ENCODE measurements at regions of chr12 and their contacts with region 1.

Region 1: DNA sequence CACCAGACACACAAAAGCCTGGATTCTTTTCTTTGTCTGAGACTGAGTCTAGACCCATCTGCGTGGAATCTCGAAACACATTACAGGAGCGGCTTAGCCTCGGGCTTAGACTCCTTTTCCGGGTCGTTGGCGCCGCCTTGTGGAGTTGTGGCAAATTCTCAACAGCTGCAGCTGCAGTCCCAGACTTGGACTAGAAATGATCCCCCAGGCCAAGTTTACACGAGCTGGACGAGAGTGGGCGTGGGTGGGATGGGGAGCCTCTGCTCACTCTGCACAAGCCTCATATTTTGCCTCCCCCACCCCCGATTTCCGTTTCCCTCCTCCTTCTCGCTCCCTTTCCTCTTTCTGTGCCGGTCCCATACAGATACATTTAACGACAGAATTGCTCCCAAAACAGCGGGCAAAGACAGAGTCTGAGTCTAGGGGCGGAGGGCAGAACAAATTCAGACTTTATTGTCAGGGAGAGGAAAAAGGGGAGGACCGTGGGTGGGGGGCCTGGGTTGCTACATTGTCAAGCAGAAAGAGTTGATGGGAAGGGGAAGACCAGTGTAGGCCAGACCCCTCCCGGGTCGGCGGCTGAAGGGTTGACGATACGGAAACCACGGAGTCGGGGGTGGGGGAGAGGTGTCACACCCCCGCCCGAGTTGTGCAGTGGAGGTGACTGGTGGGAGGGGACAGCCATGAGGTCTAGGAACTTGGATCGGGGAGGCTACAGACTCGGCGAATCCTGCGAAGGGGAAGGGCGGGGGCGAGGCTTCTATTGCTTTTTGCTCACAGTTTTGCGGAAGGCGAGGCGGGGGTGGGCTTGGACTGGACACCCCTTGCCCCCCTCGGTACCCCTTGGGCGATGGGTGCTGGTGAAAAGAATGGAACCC is 4.7 kb upstream of the GPR84 start:
- DNase-seq: peak; percentile 85
- H3K4me3 ChIP-seq: peak overlapping the region; percentile 6 to 39 (median 23)
- H3K27ac ChIP-seq: no peak overlapping the region
- H3K4me1 ChIP-seq: peaks cover 33% of the 10 kb centered on the region
- H3K27me3 ChIP-seq: no peaks in the 10 kb centered on the region
- CTCF ChIP-seq: peak; percentile 91 to 92
- POLR2A ChIP-seq: no peak

Region 2: GRCh38 chr12:54220092-54220557 is 148.8 kb before region 1 on chr12:
- CTCF ChIA-PET with region 1: interaction called, 12 read pairs
- POLR2A ChIA-PET with region 1: no interaction called
- dilution Hi-C with region 1: no loop called
- intact Hi-C with region 1: loop called (anchors 1 kb)
- DNase-seq: peak; percentile 76
- H3K4me3 ChIP-seq: no peak overlapping the region
- H3K27ac ChIP-seq: no peak overlapping the region
- H3K4me1 ChIP-seq: peaks cover 14% of the 10 kb centered on the region
- H3K27me3 ChIP-seq: peaks cover 2 to 5% of the 10 kb centered on the region in 2 experiments
- CTCF ChIP-seq: peak; percentile 77 to 85
- POLR2A ChIP-seq: no peak

Region 3: GRCh38 chr12:54294152-54294952 is 74.6 kb before region 1 on chr12:
- CTCF ChIA-PET with region 1: interaction called, 9 read pairs
- POLR2A ChIA-PET with region 1: interaction called, 6 read pairs
- dilution Hi-C with region 1: no loop called
- intact Hi-C with region 1: loop called (anchors 2 kb)
- DNase-seq: peak; percentile 53
- H3K4me3 ChIP-seq: no peak overlapping the region
- H3K27ac ChIP-seq: no peak overlapping the region
- H3K4me1 ChIP-seq: no peaks in the 10 kb centered on the region
- H3K27me3 ChIP-seq: peaks cover 4 to 6% of the 10 kb centered on the region in 2 experiments
- CTCF ChIP-seq: peak; percentile 71 to 74
- POLR2A ChIP-seq: no peak

Region 4: DNA sequence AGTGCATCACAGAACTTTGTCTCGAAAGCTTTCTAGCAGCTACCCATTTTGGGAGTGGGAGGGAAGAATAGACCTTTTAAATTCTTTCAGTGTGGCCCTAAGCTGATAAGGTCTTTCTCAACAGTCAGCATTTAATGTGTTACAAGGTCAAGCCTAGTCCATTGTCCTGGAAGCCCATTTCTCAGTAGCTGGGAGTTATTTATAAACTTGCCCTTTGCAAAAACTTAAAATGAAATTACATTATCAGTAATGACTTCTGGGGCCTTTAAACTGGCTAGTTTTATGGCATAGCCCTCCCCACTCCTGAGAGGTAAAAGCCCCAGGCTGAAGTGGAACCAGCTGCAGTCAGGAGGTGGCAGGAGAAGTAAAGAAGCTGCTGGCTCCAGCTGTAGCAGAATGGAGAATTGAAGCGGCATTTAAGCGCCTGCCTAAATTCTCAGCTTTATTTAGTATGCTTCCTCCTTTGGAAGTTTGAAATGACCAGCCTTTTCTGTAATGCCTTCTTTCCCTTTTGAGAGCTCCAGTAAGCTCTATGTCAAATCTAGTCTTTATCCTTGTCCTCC is 31.6 kb before region 1 on chr12:
- CTCF ChIA-PET with region 1: interaction called, 22 read pairs
- POLR2A ChIA-PET with region 1: no interaction called
- dilution Hi-C with region 1: no loop called
- intact Hi-C with region 1: no loop called
- DNase-seq: no peak
- H3K4me3 ChIP-seq: no peak overlapping the region
- H3K27ac ChIP-seq: no peak overlapping the region
- H3K4me1 ChIP-seq: no peaks in the 10 kb centered on the region
- H3K27me3 ChIP-seq: no peaks in the 10 kb centered on the region
- CTCF ChIP-seq: no peak
- POLR2A ChIP-seq: no peak

Region 5: DNA sequence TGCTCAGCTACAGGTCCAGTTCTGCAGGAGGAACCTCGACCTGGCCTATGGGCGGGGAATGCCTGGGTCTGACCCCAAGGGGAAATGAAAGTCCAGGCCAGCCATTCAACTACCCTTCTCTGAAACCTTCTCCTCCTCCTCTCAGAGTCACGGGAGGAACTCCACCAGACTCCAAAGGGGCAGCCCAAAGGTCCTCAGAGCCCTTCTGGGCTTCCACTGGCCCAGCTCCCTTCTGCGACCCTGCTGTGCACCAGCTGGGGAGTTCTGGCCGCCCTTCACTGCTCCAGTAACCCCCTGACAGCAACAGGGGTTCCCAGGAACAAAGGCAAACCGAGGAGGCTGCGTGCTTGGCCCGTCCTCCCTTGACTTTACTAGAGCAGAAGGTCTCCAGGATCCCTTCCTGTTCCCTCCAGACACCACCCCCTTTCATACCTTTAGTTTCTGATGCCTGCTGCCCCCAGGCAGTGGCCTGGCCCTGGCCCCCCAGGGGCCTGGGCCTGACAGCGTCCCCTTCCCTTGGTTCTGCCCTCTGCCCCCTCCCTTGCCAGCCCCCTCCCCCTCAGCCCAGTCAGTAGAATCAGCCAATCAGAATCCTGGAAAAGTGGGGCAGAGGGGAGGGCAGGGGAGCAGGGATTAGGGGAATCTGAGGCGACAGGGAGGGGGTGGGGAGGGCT is 16.4 kb after region 1 on chr12:
- CTCF ChIA-PET with region 1: interaction called, 142 read pairs
- POLR2A ChIA-PET with region 1: no interaction called
- dilution Hi-C with region 1: no loop called
- intact Hi-C with region 1: no loop called
- DNase-seq: no peak
- H3K4me3 ChIP-seq: no peak overlapping the region
- H3K27ac ChIP-seq: no peak overlapping the region
- H3K4me1 ChIP-seq: no peaks in the 10 kb centered on the region
- H3K27me3 ChIP-seq: no peaks in the 10 kb centered on the region
- CTCF ChIP-seq: no peak
- POLR2A ChIP-seq: no peak

Measured in endothelial cell of umbilical vein (primary cell).